AG04449 (cell line): ENCODE measurements at regions of chr18 and their contacts with region 1.

Region 1: DNA sequence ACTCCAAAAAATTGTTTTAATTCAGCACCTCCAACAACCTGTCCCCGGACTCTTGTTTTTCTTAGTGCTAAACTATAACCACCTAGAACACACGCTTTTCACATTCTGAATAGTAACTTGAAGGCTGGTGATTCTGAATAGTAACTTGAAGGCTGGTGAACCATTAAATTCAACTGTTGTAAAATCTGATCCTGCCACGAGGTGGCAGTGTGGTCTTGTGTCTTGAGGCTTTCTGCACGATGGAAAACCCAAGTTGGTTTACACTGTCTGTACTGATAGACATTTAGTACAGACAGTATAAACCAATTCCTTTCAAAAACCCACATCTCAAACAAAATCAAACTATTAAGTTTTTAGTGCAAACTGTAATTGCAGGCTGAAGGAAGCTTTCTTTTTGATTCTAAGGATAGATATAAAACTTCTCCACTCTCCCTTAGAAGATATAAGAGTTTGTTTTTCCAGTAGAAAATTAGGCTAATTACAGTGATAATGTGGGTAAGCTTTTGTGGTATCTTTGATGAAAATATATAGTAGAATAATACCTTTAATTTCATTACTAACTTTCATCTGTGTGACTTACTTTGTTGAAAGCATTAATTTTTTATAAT is 57.6 kb downstream of the VAPA start:
- DNase-seq: peak; percentile 26
- H3K4me3 ChIP-seq: no peak overlapping the region
- CTCF ChIP-seq: peak; percentile 45

Region 2: DNA sequence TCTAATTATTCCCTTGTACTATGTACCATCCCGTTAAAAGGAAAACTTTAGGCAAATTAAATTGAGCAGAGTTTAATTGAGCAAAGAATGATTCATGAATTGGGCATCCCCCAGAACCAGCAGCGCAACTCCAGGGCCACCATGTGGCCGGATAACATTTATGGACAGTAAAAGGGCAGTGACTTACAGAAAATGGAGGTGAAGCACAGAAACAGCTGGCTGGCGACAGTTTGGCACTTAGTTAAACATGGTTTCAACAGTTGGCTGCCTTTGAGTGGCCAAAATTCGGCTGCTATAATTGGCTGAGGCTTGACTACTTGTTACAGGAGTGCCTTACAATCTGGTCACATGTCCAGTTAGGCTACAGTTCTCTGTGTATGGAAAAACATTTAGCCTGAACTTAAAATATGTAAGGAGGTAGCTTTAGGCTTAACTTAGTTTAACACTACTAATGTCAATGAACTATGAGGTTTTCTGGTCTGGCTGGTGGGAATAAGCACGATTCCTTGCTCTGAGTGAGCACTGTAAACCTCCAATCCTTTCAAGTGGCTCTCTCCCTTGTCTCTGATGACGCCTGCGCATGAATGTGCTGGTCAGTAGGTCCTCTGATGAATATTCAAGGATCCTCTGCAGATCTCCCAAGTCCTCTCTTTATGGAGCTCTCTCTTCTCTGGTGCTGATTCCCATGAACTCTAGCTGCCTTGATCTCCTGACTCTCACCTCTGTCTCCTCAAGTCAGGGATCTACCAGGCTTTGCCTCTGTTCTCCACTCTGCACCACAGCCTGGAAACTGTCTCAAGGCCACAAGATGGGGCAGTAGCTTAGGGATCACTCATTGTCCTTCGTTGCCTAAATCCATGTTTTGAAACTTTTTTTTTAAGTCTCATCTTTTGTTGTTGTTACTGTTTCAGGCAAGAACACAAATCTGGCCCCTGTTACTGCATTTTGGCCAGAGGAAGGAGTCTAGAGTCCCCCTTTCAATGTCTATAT is 287.7 kb before region 1 on chr18:
- CTCF ChIA-PET with region 1: interaction called, 10 read pairs
- POLR2A ChIA-PET with region 1: no interaction called
- DNase-seq: no peak
- H3K4me3 ChIP-seq: no peak overlapping the region
- CTCF ChIP-seq: peak; percentile 68

Region 3: DNA sequence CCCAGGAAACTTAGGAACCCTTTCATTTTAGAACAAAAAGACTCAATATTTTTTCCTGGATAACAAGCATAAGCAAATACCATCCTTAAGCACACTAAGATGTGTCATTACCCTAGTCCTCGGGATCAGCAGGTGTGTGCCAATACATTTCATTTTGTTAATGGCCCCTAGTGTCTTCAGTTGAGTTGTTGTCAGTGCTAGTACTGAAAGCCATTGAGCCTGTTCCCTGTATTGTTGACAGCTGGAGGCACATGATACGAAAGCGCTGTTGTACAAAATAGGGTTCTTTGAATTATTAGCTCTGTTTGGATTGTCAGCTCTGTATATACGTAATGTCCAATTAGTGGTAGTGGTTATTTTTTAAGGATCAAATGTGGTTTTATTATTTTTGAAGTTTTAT is 28.1 kb before region 1 on chr18:
- CTCF ChIA-PET with region 1: no interaction called
- POLR2A ChIA-PET with region 1: no interaction called
- DNase-seq: no peak
- H3K4me3 ChIP-seq: no peak overlapping the region
- CTCF ChIP-seq: no peak

Region 4: DNA sequence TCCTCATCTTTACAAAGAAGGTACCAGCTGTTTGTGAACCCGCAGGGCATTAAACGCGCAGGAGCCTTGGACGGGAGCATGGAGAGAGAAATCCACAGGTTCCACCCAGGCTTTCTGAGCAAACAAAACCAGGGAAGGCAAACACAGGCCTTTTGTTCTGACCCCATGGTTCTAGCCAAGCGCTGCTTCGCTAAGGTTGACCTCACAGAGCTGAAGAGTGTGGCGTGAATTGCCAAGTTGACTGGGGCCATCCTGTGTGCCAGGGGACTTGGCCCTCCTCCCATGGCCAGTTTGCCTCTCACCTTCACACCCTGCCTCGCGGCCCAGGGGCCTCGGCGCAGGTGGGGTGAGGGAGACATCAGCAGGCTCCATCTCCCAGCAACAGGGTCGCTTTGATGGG is 16.5 kb after region 1 on chr18:
- CTCF ChIA-PET with region 1: interaction called, 60 read pairs
- POLR2A ChIA-PET with region 1: no interaction called
- DNase-seq: no peak
- H3K4me3 ChIP-seq: no peak overlapping the region
- CTCF ChIP-seq: no peak

Region 5: DNA sequence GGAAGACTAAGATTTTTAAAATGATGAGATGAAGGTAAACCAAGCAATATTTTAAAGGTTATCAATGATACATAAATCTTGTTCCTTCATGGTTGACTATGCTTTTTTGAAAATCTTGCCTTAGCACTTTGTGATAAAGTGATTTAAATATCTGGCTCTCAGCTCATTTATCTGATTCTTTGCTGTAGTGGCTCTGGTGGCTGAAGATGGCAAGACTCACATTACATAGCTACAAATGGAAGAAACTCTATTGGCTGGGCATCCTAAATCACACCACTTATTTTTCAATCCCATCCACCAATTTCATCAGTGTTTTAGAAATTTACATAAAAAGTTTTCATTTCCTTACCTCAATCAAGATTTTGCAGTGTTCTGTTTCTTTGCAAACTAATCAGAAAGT is 466.4 kb after region 1 on chr18:
- CTCF ChIA-PET with region 1: interaction called, 11 read pairs
- POLR2A ChIA-PET with region 1: no interaction called
- DNase-seq: no peak
- H3K4me3 ChIP-seq: no peak overlapping the region
- CTCF ChIP-seq: no peak

Region 6: DNA sequence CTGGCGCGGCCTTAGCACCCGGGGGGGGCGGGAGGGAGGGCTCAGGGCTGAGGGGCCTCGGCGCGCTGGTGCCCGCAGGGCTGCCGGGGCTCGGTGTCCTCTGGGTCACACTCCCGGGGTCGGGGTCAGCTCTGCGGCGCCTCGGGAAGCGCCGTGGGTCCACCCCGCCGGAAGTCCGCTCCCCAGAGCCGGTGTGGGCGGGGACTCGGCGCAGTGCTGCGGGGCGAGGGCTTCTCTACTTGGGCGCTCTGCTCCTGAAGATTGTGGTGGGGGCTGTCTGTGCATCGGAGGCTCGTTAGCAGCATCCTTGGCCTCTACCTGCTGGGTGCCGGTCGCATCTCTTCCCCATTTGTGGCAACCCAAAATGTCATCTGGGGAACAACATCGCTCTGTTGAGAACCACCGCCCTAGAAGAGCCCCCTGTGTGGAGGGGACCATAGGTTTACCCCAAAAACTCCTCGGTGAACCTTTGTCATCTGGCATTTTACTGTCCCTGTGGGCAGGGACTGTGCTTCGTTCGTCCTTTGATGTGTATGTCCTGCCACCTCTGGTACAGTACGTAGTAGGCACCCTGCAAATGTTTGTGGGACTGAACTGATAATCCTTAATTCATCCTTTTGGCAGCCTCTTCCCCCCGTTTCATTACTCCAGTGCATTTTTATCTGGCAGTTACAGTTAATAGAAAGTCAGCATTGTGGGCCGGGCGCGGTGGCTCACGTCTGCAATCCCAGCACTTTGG is 555.0 kb after region 1 on chr18:
- CTCF ChIA-PET with region 1: interaction called, 314 read pairs
- POLR2A ChIA-PET with region 1: no interaction called
- DNase-seq: no peak
- H3K4me3 ChIP-seq: peak overlapping the region; percentile 70
- CTCF ChIP-seq: no peak